ENCODE measurements at regions of chr9 and their contacts with region 1.

Region 1: DNA sequence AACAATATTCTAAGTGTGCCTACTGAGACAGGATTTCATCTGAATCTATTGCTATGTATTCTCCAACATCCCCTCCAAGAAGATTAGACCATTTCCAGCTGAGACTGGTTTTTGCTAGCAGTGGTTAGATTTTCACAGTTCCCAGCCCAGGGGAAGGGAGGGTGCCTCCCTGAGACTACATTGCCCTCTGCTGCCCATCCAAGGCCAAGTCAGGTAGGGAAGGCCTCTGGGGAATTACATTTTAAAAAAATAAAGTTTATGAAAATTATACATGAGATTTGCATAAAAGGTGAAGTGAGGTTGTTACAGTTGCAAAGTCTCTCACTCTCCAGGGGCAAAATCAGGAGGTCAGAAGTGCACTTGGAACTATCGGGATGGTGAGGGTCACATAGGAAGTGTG is 28.0 kb upstream of the SYK start:
- H3K4me3 Mint-ChIP-seq: no peak overlapping the region
- H3K27ac Mint-ChIP-seq: peak overlapping the region; percentile 39
- H3K4me1 Mint-ChIP-seq: peaks cover 60% of the 10 kb centered on the region
- H3K27me3 Mint-ChIP-seq: no peaks in the 10 kb centered on the region

Region 2: DNA sequence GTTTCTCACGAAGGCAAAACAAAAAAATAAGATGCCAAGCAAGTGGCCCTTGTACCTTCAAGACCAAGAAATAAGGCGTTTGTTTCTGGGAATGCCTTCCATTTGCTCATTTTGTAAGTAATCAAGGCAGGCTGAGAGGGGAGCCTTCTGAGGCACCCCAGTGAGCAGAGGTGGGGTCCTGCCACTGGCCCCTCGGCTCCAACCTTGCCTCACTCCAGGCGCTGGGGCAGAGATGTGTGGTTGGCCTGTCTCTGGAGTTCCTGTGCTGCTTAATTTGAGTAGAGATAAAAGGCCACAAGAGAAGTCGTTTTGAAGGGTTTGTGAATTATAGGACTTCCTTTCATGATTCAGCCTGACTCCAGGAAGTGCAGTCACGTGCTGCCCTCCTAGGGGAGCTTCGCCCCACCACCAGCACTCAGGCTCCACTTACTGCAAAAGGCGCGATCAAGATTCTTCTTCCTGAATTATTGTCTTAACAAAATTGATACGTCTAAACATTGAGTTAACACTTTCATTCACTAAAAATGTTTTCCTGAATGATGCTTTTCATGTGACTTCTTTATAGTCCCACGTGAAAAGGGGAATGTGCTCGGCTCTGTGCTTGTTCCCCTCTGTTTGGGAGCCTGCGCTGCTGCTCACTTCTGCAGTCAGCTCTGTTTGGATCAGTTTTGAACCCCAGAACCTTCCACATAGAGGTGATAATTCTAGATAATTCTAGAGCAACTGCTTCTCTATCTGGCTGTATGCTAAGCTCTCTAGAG is 41.7 kb after region 1 on chr9:
- intact Hi-C with region 1: no loop called
- H3K4me3 Mint-ChIP-seq: peak overlapping the region; percentile 54
- H3K27ac Mint-ChIP-seq: peak overlapping the region; percentile 64
- H3K4me1 Mint-ChIP-seq: peaks cover 89% of the 10 kb centered on the region
- H3K27me3 Mint-ChIP-seq: no peaks in the 10 kb centered on the region

Region 3: GRCh38 chr9:90827181-90827871 is 53.7 kb after region 1 on chr9:
- intact Hi-C with region 1: loop called (anchors 5 kb)
- H3K4me3 Mint-ChIP-seq: peak overlapping the region; percentile 63
- H3K27ac Mint-ChIP-seq: peak overlapping the region; percentile 87
- H3K4me1 Mint-ChIP-seq: peaks cover 90% of the 10 kb centered on the region
- H3K27me3 Mint-ChIP-seq: no peaks in the 10 kb centered on the region

Region 4: DNA sequence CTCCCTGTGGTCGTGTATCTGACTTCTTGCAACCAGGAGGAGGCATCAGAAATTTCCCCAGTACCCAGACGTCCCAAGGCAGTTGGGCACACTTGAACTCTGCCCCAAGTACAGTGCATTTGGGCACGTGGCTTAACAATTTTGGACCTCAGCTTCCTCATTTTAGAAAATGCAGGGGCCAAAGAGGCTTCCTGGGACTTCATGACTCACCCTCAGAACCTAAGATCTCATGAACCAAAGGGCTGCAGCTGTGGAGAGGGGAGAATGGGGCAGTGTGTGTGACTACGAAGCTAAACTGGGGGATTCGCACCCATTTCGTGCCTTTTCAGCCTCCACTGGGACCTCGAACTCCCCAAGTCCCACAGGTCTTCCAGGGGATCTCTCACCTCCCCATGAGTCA is 87.2 kb after region 1 on chr9:
- intact Hi-C with region 1: no loop called
- H3K4me3 Mint-ChIP-seq: no peak overlapping the region
- H3K27ac Mint-ChIP-seq: peak overlapping the region; percentile 50
- H3K4me1 Mint-ChIP-seq: peaks cover 55% of the 10 kb centered on the region
- H3K27me3 Mint-ChIP-seq: no peaks in the 10 kb centered on the region

Measured in dendritic cell treated with granulocyte-macrophage colony-stimulating factor and Interleukin-4, amounts not matched to agents 40 ng/mL and 50 ng/mL, for 4 days (primary cell).